ENCODE measurements at regions of chr2 and their contacts with region 1.

Region 1: GRCh38 chr2:165401285-165401852 is 68.1 kb upstream of the CSRNP3 start:
- DNase-seq: peak in 5 of 7 donors; percentile 16 to 41 (median 31)
- H3K4me3 ChIP-seq: no peak overlapping the region
- H3K27ac ChIP-seq: no peak overlapping the region
- H3K4me1 ChIP-seq: peaks cover 0 to 6% of the 10 kb centered on the region in 2 donors
- H3K27me3 ChIP-seq: peaks cover 5% of the 10 kb centered on the region
- CTCF ChIP-seq: peak; percentile 62 to 82 (median 72)
- POLR2A ChIP-seq: no peak

Region 2: DNA sequence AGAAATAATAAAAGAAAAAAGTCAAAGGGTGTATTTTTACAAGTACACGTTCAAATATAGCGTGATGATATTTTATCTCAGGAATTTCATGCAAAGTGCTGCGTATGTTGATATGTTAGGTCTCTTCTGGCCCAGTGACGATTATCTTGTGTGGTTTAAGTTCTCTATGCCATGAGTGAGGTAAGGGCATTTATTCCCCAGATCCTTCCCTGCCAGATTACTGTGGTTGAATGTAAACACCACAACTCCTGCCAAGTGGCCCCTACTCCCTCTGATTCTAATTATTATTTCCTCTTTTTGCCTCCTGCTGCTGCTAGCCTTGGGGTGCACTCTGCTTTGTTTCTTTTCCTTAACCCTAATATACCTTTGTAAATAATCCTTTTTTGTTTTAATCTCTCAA is 150.0 kb before region 1 on chr2:
- intact Hi-C with region 1: no loop called
- DNase-seq: no peak
- H3K4me3 ChIP-seq: no peak overlapping the region
- H3K27ac ChIP-seq: no peak overlapping the region
- H3K4me1 ChIP-seq: no peaks in the 10 kb centered on the region
- H3K27me3 ChIP-seq: no peaks in the 10 kb centered on the region
- CTCF ChIP-seq: no peak
- POLR2A ChIP-seq: no peak

Region 3: GRCh38 chr2:165698444-165698894 is 297.1 kb after region 1 on chr2:
- intact Hi-C with region 1: loop called (anchors 5 kb)
- DNase-seq: peak; percentile 28 to 73 (median 39)
- H3K4me3 ChIP-seq: no peak overlapping the region
- H3K27ac ChIP-seq: no peak overlapping the region
- H3K4me1 ChIP-seq: no peaks in the 10 kb centered on the region
- H3K27me3 ChIP-seq: no peaks in the 10 kb centered on the region
- CTCF ChIP-seq: peak; percentile 24 to 69 (median 54)
- POLR2A ChIP-seq: no peak

Region 4: DNA sequence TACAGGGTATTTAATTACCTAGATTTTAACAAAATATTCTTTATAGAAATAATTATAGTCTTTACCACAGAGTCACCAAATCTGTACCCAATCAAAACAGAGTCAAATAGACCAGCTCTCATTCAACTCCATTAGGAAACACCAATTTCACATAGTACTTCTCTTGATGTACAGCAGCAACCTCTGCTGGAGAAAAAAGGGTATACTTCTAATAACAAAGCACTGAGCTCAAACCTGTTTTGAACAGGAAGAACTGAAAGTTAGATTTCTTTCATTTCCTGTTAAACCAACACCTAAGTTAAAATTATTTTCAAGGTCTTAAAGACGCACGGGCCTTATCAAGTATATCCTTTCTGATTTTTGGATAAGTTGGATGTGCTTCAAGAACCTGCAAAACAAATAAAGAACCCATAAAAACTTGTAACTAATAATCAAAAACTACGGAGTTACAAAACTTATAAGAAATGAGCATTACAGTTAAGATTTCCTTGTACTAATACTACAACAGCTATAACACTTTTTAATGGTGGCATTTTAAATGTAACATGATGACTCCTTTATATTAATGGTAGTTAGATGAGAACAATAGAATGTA is 473.2 kb after region 1 on chr2:
- intact Hi-C with region 1: loop called in 1 of 2 experiments (anchors 10 kb)
- DNase-seq: peak in 1 of 7 donors; percentile 8
- H3K4me3 ChIP-seq: no peak overlapping the region
- H3K27ac ChIP-seq: no peak overlapping the region
- H3K4me1 ChIP-seq: no peaks in the 10 kb centered on the region
- H3K27me3 ChIP-seq: no peaks in the 10 kb centered on the region
- CTCF ChIP-seq: peak; percentile 28 to 75 (median 68)
- POLR2A ChIP-seq: no peak

Measured in adrenal gland (tissue), 19 donors.